A673 (cell line): ENCODE measurements at regions of chr19 and their contacts with region 1.

Region 1: GRCh38 chr19:13839130-13839937 is 37.6 kb upstream of the NANOS3 start:
- DNase-seq: peak; percentile 91
- H3K4me3 ChIP-seq: peak overlapping the region; percentile 81
- H3K27ac ChIP-seq: peak overlapping the region; percentile 95
- H3K4me1 ChIP-seq: peaks cover 60% of the 10 kb centered on the region
- H3K27me3 ChIP-seq: no peaks in the 10 kb centered on the region
- CTCF ChIP-seq: 0 out of 2 replicates have a peak, but pooled peaks have one; percentile 27

Region 2: DNA sequence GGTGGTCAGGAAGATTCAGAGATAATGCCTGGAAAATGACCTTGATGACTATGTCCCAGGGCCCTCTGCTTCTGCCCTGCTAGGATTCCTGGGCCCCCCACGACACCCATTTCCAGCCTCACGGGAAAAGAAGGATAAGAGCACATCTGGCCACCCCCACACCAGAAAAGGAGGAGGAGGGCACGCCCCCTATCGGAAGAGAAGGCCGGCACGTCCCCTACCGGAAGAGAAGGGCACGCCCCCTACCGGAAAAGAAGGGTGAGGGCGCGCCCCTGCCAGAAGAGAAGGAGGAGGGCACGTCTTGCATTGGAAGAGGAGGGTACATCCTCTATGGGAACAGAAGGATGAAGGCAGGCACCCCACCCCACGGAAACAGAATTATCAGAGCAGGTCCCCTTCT is 604.8 kb before region 1 on chr19:
- CTCF ChIA-PET with region 1: no interaction called
- POLR2A ChIA-PET with region 1: no interaction called
- intact Hi-C with region 1: no loop called
- DNase-seq: peak; percentile 87
- H3K4me3 ChIP-seq: no peak overlapping the region
- H3K27ac ChIP-seq: no peak overlapping the region
- H3K4me1 ChIP-seq: peaks cover 5% of the 10 kb centered on the region
- H3K27me3 ChIP-seq: no peaks in the 10 kb centered on the region
- CTCF ChIP-seq: peak; percentile 92

Region 3: GRCh38 chr19:14115756-14116155 is 276.4 kb after region 1 on chr19:
- CTCF ChIA-PET with region 1: interaction called, 11 read pairs
- POLR2A ChIA-PET with region 1: no interaction called
- intact Hi-C with region 1: no loop called
- DNase-seq: no peak
- H3K4me3 ChIP-seq: no peak overlapping the region
- H3K27ac ChIP-seq: no peak overlapping the region
- H3K4me1 ChIP-seq: peaks cover 24% of the 10 kb centered on the region
- H3K27me3 ChIP-seq: no peaks in the 10 kb centered on the region
- CTCF ChIP-seq: no peak